Activated CD4-positive, alpha-beta memory T cell treated with anti-CD3 and anti-CD28 coated beads for 36 hours (primary cell): ENCODE measurements at regions of chr2 and their contacts with region 1.

Region 1: DNA sequence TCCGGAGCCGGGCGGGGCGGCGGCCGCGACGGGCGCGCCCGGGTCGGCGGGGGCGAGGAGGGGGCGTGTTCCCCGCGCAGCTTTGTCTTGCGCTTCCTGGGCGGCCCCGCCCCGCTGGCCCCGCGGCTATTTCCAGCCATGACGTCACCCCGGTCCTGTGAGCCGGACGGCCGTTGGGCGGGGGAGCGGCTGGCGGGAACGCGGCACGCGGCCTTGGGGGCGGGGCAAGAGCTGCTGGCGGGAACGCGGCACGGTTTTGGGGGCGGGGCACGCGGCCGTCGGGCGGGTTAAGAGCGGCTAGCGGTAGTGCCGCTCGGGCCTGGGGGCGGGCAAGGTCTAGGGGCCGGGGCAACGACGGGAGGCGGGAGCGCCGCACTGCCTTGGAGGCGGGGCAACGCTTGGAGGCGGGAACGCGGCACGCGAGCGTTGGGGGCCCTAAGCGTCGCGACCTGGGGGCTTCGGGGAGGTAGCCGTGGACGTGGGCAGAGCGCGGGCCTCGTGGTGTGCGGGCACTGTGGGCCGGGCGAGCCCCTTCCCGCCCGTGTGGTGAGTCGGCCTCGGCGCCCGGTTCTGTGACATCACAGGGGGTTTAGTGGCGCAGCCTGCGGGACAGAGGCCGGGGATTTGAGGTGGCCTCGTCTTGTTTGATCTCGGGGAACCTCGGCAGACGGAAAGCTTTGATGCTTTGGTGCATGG is 704 bp downstream of the KLF11 start:
- DNase-seq: peak; percentile 94
- H3K4me3 Mint-ChIP-seq: peak overlapping the region; percentile 64
- H3K27ac Mint-ChIP-seq: peak overlapping the region; percentile 47
- H3K4me1 Mint-ChIP-seq: peaks cover 22% of the 10 kb centered on the region
- H3K27me3 Mint-ChIP-seq: peaks cover 3% of the 10 kb centered on the region

Region 2: DNA sequence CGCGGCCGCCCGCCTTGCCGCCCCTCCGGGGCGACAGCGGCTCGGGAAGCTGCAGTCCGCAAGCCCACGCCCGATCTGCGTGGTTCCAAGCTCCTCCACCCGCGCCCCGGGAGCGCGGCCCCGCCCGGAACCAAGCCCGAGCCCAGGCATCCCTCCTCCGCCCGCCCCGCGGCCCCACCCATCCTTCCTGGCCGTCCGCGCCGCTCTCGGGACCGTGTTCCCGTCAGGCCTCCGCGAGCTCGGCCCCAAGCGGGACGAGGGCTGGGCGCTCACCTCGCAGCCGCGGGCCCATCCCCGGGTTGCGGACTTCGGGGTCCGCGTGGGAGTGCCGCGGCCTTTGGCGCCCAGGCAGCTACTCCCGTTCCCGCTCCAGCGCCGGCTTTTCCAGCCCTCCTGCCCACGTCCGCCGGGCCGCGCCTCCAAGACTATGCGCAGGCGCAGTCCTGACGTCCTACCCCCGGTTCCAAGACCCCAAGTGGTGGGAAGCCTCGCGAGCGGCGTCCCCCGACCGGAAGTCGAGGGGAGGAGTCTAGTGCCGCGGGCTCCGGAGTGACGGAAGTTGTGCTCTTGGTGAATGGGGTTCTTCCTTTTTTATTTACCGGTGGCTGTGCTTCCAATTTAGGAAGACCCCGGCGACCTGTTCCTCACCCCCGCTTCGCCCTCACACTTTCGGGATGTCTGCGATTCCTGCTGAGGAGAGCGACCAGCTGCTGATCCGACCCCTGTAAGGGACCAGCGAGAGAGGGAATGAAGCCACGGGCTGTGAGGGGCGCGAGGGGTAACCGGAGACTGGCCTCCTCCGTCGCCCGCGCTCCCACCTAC is 620.7 kb before region 1 on chr2 and contains the starts of genes CPSF3 and ITGB1BP1:
- CTCF ChIA-PET with region 1: no interaction called
- POLR2A ChIA-PET with region 1: no interaction called
- intact Hi-C with region 1: loop called (anchors 10 kb)
- DNase-seq: peak; percentile 98
- H3K4me3 Mint-ChIP-seq: peak within 1 kb of the TSS; percentile 87
- H3K27ac Mint-ChIP-seq: peak within 1 kb of the TSS; percentile 88
- H3K4me1 Mint-ChIP-seq: peaks cover 35% of the 10 kb centered on the region
- H3K27me3 Mint-ChIP-seq: no peaks in the 10 kb centered on the region
- total RNA-seq, gene CPSF3: 77.5 to 78.1 TPM
- total RNA-seq, gene ITGB1BP1: 136 to 142 TPM

Region 3: GRCh38 chr2:9799665-9800632 is 244.1 kb before region 1 on chr2:
- CTCF ChIA-PET with region 1: interaction called, 75 read pairs
- POLR2A ChIA-PET with region 1: interaction called, 3 read pairs
- intact Hi-C with region 1: loop called (anchors 1 kb)
- DNase-seq: peak; percentile 94
- H3K4me3 Mint-ChIP-seq: no peak overlapping the region
- H3K27ac Mint-ChIP-seq: peak overlapping the region; percentile 36
- H3K4me1 Mint-ChIP-seq: peaks cover 35% of the 10 kb centered on the region
- H3K27me3 Mint-ChIP-seq: no peaks in the 10 kb centered on the region

Region 4: DNA sequence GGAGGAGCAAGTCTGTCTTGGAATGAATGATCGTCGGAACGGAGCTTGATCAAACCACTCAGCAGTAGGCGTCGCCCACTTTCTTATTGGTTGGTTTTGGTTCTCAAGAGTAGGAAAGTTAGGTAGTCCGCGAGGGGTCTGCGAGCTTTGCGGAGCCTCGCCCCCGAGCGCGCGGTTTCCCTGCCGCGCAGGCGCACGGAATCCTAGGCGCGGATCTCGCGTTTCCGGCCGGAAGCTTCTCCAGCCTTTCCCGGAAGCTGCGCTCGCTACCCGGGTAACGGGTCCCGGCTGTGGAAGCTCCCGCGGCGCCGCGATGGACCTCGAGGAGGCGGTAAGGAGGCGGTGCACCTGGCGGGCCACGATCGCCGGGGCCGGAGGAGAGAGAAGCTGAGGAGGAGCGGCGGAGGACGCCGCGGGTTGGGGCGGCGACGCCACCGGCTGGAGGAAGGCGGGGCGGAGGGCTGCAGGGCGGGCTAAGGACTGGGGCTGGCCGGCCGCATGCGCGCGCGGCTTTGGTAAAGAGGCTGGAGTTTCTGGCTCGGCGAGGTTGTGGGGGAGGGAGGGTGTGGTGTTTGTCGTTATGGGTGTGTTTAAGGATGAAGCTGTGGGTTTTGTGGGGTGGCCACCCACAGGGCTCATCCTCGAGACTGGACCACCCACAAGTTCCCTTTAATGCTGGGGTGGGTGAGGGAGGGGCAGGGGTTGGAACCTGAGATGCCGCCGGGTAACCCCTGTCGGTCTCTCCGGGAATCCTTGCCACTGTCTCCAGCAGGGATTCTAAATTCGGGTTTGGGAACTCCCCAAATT is 200.6 kb before region 1 on chr2 and contains the start of gene TAF1B:
- CTCF ChIA-PET with region 1: interaction called, 4 read pairs
- POLR2A ChIA-PET with region 1: interaction called, 4 read pairs
- intact Hi-C with region 1: loop called (anchors 5 kb)
- DNase-seq: peak; percentile 92
- H3K4me3 Mint-ChIP-seq: peak within 1 kb of the TSS; percentile 91
- H3K27ac Mint-ChIP-seq: peak within 1 kb of the TSS; percentile 89
- H3K4me1 Mint-ChIP-seq: peaks cover 42% of the 10 kb centered on the region
- H3K27me3 Mint-ChIP-seq: no peaks in the 10 kb centered on the region
- total RNA-seq, gene TAF1B: 32.6 TPM

Region 5: DNA sequence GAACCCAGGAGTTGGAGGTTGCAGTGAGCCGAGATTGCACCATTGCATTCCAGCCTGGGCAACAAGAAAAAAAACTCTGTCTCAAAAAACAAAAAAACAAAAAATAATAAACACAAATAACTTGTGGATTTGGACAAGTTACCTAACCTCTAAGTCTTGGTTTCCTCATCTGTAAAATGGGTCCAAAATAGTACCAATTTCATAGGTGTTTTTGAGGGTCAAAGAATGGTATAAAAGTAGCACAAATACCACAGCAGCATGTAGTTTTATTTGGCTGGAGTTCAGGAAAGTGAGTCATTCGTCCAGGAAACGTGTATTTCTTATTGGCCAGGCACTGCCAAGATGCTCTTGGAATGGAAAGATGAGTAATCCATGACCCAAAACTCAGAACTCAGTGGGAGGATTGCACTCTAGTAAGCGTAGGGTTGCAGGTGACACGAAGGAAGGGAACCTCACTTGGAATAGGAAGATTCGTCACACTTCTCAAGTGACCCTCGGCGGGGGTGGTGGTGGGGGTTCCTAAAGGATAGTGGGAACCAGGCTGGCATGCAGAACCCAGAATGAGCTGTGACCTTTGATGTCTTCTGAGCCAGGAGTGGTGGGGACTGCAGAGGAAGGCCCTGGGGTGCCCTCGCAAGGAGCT is 68.1 kb before region 1 on chr2:
- CTCF ChIA-PET with region 1: interaction called, 13 read pairs
- POLR2A ChIA-PET with region 1: no interaction called
- intact Hi-C with region 1: loop called (anchors 2 kb)
- DNase-seq: peak; percentile 70
- H3K4me3 Mint-ChIP-seq: peak overlapping the region; percentile 7
- H3K27ac Mint-ChIP-seq: peak overlapping the region; percentile 16
- H3K4me1 Mint-ChIP-seq: peaks cover 53% of the 10 kb centered on the region
- H3K27me3 Mint-ChIP-seq: peaks cover 2% of the 10 kb centered on the region

Region 6: GRCh38 chr2:10028988-10029874 is 14.8 kb before region 1 on chr2:
- CTCF ChIA-PET with region 1: interaction called, 13 read pairs
- POLR2A ChIA-PET with region 1: interaction called, 4 read pairs
- intact Hi-C with region 1: no loop called
- DNase-seq: peak; percentile 73
- H3K4me3 Mint-ChIP-seq: no peak overlapping the region
- H3K27ac Mint-ChIP-seq: no peak overlapping the region
- H3K4me1 Mint-ChIP-seq: peaks cover 19% of the 10 kb centered on the region
- H3K27me3 Mint-ChIP-seq: no peaks in the 10 kb centered on the region

Region 7: GRCh38 chr2:10072656-10073480 is 28.8 kb after region 1 on chr2:
- CTCF ChIA-PET with region 1: interaction called, 14 read pairs
- POLR2A ChIA-PET with region 1: no interaction called
- intact Hi-C with region 1: no loop called
- DNase-seq: peak; percentile 86
- H3K4me3 Mint-ChIP-seq: no peak overlapping the region
- H3K27ac Mint-ChIP-seq: no peak overlapping the region
- H3K4me1 Mint-ChIP-seq: peaks cover 4% of the 10 kb centered on the region
- H3K27me3 Mint-ChIP-seq: peaks cover 37% of the 10 kb centered on the region